ENCODE measurements at regions of chr7 and their contacts with region 1.

Region 1: GRCh38 chr7:5677538-5678294 is 103.7 kb downstream of the RNF216 start:
- DNase-seq: peak; percentile 74
- ATAC-seq: peak; percentile 22
- H3K4me3 ChIP-seq: no peak overlapping the region
- H3K4me3 Mint-ChIP-seq: no peak overlapping the region
- H3K27ac ChIP-seq: peak overlapping the region in 1 of 2 donors; percentile 32
- H3K27ac Mint-ChIP-seq: peak overlapping the region; percentile 57
- H3K4me1 ChIP-seq: peaks cover 51 to 54% of the 10 kb centered on the region in 2 donors
- H3K4me1 Mint-ChIP-seq: peaks cover 53% of the 10 kb centered on the region
- H3K27me3 ChIP-seq: no peaks in the 10 kb centered on the region
- H3K27me3 Mint-ChIP-seq: no peaks in the 10 kb centered on the region
- CTCF ChIP-seq: peak; percentile 77

Region 2: GRCh38 chr7:5615190-5616070 is 62.3 kb before region 1 on chr7:
- CTCF ChIA-PET with region 1: no interaction called
- POLR2A ChIA-PET with region 1: no interaction called
- intact Hi-C with region 1: no loop called
- DNase-seq: no peak
- ATAC-seq: no peak
- H3K4me3 ChIP-seq: no peak overlapping the region
- H3K4me3 Mint-ChIP-seq: no peak overlapping the region
- H3K27ac ChIP-seq: no peak overlapping the region
- H3K27ac Mint-ChIP-seq: no peak overlapping the region
- H3K4me1 ChIP-seq: no peaks in the 10 kb centered on the region
- H3K4me1 Mint-ChIP-seq: no peaks in the 10 kb centered on the region
- H3K27me3 ChIP-seq: no peaks in the 10 kb centered on the region
- H3K27me3 Mint-ChIP-seq: no peaks in the 10 kb centered on the region
- CTCF ChIP-seq: no peak

Region 3: GRCh38 chr7:5657901-5658300 is 19.8 kb before region 1 on chr7:
- CTCF ChIA-PET with region 1: interaction called, 16 read pairs
- POLR2A ChIA-PET with region 1: interaction called, 3 read pairs
- intact Hi-C with region 1: no loop called
- DNase-seq: no peak
- ATAC-seq: no peak
- H3K4me3 ChIP-seq: no peak overlapping the region
- H3K4me3 Mint-ChIP-seq: no peak overlapping the region
- H3K27ac ChIP-seq: no peak overlapping the region
- H3K27ac Mint-ChIP-seq: no peak overlapping the region
- H3K4me1 ChIP-seq: peaks cover 15 to 18% of the 10 kb centered on the region in 2 donors
- H3K4me1 Mint-ChIP-seq: peaks cover 14% of the 10 kb centered on the region
- H3K27me3 ChIP-seq: no peaks in the 10 kb centered on the region
- H3K27me3 Mint-ChIP-seq: no peaks in the 10 kb centered on the region
- CTCF ChIP-seq: no peak

Region 4: GRCh38 chr7:5694912-5695726 is 17.4 kb after region 1 on chr7:
- CTCF ChIA-PET with region 1: interaction called, 144 read pairs
- POLR2A ChIA-PET with region 1: interaction called, 12 read pairs
- intact Hi-C with region 1: loop called (anchors 1 kb)
- DNase-seq: peak; percentile 58
- ATAC-seq: peak; percentile 44
- H3K4me3 ChIP-seq: peak overlapping the region; percentile 39 to 56 (median 49)
- H3K4me3 Mint-ChIP-seq: peak overlapping the region; percentile 88
- H3K27ac ChIP-seq: peak overlapping the region; percentile 93 to 94
- H3K27ac Mint-ChIP-seq: peak overlapping the region; percentile 93
- H3K4me1 ChIP-seq: peaks cover 83 to 96% of the 10 kb centered on the region in 2 donors
- H3K4me1 Mint-ChIP-seq: peaks cover 94% of the 10 kb centered on the region
- H3K27me3 ChIP-seq: no peaks in the 10 kb centered on the region
- H3K27me3 Mint-ChIP-seq: no peaks in the 10 kb centered on the region
- CTCF ChIP-seq: no peak

Region 5: DNA sequence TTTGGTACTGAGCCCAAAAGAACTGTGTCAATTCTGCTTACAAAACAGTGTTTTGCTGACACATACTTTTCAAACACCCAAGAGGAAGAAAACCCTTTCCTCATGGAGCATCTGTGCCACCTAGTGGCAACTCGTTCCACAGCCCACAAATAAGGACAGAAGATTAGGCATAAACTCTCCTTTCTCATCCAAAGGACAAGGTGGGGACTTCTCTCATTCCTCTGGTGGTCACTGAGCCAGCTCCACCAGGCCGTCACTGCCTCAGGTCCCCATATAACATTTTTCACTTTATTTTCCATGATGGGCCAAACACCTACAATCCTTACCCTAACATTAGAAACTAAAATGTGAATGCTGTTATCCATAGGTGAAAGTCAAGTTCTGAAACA is 26.8 kb after region 1 on chr7:
- CTCF ChIA-PET with region 1: interaction called, 144 read pairs
- POLR2A ChIA-PET with region 1: interaction called, 6 read pairs
- intact Hi-C with region 1: loop called (anchors 1 kb)
- DNase-seq: peak; percentile 87
- ATAC-seq: peak; percentile 54
- H3K4me3 ChIP-seq: no peak overlapping the region
- H3K4me3 Mint-ChIP-seq: no peak overlapping the region
- H3K27ac ChIP-seq: no peak overlapping the region
- H3K27ac Mint-ChIP-seq: no peak overlapping the region
- H3K4me1 ChIP-seq: peaks cover 15 to 30% of the 10 kb centered on the region in 2 donors
- H3K4me1 Mint-ChIP-seq: peaks cover 35% of the 10 kb centered on the region
- H3K27me3 ChIP-seq: no peaks in the 10 kb centered on the region
- H3K27me3 Mint-ChIP-seq: no peaks in the 10 kb centered on the region
- CTCF ChIP-seq: peak; percentile 93